ENCODE measurements at regions of chr17 and their contacts with region 1.

Region 1: DNA sequence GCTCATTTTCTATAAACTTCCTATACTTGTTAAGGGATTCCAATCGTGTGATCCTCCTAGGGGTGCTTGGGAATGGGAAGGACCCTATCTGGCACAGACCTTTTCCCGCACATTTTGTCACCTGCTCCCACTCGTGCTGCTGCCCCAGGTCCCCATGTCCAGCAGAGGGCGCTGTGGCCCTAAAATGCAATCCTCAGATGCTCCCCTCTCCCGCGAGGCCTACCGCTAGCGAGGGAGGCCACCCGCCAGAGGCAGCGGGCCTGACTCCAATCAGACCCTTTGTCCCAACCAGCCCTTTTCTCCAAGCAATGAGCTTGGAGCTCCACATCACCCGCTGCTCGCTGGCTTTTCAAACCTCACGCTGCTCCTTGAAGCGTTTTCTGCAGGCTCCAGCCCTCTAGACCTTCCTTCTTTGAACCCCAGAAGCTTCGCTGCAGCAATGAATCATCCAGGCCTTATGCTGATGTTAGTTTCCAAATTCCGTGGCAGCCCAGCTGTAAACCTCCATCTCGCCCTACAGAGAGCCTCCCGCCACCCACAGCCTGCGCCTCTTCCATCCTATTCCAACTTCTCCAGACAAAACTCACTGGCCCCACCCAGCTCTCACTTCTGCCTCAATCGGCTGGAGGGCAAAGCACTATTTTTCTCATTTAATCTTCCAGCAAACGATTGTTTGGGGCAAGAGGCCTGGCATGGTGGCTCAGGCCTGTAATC is 23.6 kb upstream of the FZD2 start:
- DNase-seq: no peak
- H3K4me3 ChIP-seq: peak overlapping the region; percentile 6; the same call in 1 of the 2 replicates
- H3K27me3 ChIP-seq: no peaks in the 10 kb centered on the region
- CTCF ChIP-seq: peak; percentile 96

Region 2: DNA sequence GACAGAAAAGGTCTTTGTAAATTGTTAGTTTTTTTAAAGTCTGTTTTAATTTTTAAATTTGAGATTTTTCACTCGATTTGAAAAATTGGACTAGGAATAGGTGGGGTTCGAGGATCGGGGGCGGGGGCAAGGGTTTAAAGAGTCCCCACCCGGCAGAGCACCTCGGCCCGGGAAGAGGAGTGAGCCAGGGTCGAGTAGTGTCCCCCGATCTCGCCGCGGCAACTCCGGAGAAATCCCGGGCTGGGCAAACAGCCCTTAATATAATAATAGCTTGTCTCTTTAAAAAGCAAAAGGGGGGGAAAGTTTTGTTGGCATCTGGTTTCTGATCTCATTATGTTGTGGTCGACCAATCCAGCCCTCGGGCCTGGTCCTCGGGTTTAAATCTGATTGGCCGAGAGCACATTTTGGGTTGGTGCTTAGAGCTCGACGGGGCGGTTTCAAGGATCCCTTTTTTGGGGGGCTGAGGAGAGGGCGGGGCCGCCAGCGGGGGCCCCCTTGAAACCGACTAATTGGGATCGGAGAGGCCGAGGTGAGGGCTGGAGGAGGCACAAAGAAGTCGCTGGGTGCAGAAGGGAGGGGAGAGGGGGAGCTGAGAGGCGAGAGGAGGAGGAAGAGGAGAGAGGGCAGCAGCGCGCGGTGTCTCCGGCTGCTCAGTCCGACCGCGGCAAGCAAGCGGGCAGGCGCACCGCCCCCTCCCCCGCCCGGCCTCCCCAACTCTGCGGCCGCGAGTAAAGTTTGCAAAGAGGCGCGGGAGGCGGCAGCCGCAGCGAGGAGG is 23.3 kb after region 1 on chr17 and contains the start of gene FZD2:
- CTCF ChIA-PET with region 1: interaction called, 27 read pairs
- POLR2A ChIA-PET with region 1: interaction called, 4 read pairs
- DNase-seq: peak; percentile 96
- H3K4me3 ChIP-seq: peak within 1 kb of the TSS; percentile 76
- H3K27me3 ChIP-seq: no peaks in the 10 kb centered on the region
- CTCF ChIP-seq: no peak
- polyA plus RNA-seq, gene FZD2: 57.1 and 93.1 TPM in 2 replicates

Region 3: DNA sequence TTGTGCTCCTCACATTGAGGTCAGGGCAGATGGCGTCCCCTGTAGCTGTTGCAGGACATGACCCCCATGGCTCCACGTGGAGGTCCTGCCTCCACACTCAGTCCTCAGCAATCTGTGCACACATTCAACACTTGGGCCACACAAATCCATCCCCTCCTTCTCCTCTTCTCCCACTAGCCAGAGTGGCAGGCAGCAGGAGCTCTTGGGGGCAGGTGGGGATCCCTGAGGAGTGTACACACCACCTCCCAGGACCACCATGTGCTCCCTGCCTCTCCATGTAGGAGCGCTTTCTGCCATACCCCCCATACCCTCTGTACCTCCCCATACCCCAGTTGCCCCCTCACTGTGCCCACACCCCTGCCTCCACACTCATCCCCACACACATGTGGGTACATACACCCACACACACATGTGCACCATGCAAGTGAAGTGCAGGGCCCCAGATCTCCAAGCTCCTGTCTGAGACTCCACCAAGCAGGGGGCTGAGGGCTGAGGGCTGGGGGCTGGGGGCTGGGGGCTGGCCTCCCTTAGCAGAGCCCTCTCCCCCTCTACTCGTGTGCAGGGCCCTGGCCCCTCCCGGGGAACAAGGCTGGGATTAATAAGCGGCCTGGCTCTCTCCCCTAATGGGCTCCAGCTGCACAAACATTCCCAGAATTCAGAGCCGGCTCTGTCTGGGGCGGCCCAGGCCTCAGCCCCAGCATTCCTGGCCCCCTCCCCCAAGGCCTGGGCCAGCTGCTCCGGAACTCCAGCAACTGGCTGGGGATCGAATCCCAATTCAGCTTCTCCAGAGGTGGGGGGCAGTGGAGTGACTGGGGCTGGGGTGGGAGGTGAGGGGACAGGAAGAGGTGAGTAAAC is 74.4 kb after region 1 on chr17:
- CTCF ChIA-PET with region 1: interaction called, 21 read pairs
- POLR2A ChIA-PET with region 1: interaction called, 4 read pairs
- DNase-seq: peak; percentile 35
- H3K4me3 ChIP-seq: no peak overlapping the region
- H3K27me3 ChIP-seq: no peaks in the 10 kb centered on the region
- CTCF ChIP-seq: no peak

Region 4: GRCh38 chr17:44636562-44636961 is 102.9 kb after region 1 on chr17:
- CTCF ChIA-PET with region 1: interaction called, 151 read pairs
- POLR2A ChIA-PET with region 1: no interaction called
- DNase-seq: peak; percentile 25
- H3K4me3 ChIP-seq: no peak overlapping the region
- H3K27me3 ChIP-seq: no peaks in the 10 kb centered on the region; the same call in 1 of the 2 replicates
- CTCF ChIP-seq: peak; percentile 46

Region 5: DNA sequence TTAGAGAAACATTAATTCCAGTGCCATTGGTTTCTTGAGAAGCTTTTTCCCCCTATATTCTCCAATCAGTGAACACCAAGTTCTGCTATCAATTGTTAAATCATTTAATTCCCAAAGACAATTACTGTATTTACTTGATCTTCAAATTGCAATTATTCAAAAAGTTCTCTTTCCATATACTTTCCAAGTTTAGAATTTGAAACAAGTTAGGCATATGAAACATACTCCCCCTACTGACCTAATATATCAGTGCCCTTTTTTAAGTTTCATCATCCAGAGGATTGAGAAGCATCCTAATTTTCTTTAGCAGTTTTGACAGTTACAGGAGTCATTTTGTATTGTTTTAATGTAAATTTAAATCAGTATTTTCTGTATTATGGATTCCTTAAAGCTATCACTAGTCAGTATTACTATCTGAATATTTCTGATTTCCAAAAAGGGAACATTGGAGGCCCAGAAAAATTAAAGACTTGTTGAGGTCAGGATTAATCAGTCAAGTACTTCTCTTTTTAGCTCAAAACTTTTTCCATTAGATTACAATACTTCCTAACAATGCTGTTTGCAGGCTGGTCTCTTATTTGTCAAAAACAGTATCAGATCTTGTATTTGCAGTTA is 138.9 kb after region 1 on chr17:
- CTCF ChIA-PET with region 1: interaction called, 22 read pairs
- POLR2A ChIA-PET with region 1: no interaction called
- DNase-seq: peak; percentile 12
- H3K4me3 ChIP-seq: no peak overlapping the region
- H3K27me3 ChIP-seq: no peaks in the 10 kb centered on the region
- CTCF ChIP-seq: peak; percentile 64